ENCODE measurements at regions of chr11 and their contacts with region 1.

Region 1: DNA sequence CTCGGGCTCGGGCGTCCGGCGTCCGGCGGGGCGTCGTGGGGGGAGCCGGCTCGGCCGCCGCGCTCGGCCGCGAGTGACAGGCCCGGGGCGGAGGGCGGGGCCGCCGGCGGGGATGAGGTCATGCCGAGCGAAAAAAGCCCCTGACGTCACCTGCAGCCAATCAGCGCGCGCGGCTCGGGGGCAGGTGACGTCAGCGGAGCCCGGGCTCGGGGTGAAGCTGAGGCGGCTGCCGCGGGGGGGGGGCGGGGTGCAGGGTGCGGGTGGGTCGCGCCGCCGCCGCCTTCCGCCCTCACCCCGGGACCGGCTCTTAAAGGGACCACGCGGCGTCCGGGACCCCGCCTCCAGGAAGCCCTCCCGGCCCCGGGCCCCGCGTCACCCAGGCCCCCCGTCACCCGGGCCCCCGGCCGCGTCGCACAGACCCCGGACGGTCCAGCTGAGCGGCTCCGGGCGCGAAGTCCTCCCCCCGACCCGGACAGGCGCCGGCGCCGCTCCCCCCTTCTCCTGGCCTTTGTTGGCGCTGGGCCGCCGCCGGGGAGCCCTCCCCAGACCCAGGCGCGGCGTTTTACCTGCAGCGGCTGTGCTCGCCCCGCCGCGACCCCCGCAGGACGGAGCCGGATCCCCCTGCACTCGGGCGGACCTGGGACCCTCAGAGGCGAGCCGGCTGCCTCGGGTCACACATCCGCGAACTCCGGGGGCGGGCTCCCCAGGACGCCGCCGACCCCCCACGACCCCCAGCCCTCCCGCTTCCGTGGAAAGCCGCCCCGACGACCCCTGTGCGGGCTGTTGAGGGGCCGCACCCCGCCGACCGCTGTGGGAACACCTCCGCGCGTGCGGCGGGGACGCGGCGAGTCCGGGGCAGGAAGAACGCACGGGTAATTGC is at the start of gene DUSP8:
- DNase-seq: peak; percentile 95
- total RNA-seq, gene DUSP8: 36.9 TPM

Region 2: DNA sequence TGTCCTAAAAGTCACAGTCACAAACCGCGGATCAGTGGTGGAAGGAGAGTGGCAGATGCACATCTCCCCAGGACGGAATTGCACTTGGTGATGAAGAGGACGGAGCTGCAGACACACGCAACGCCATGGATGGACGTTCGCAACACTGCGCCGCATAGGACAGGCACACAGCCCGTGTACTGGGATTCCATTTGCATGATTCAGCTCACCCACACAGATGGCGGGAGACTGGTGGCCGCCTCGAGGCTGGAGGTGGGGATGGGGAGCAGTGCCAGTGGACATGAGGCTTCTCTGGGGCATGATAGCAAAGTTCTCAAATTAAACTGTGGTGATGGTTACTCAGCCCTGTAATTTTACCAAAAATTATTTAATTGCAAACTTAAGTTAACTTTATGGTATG is 37.8 kb before region 1 on chr11:
- intact Hi-C with region 1: loop called (anchors 5 kb)
- DNase-seq: no peak

Measured in cardiac septum (tissue), 1 donor.